Activated CD4-positive, alpha-beta T cell treated with anti-CD3 and anti-CD28 coated beads for 36 hours (primary cell): ENCODE measurements at regions of chr14 and their contacts with region 1.

Region 1: DNA sequence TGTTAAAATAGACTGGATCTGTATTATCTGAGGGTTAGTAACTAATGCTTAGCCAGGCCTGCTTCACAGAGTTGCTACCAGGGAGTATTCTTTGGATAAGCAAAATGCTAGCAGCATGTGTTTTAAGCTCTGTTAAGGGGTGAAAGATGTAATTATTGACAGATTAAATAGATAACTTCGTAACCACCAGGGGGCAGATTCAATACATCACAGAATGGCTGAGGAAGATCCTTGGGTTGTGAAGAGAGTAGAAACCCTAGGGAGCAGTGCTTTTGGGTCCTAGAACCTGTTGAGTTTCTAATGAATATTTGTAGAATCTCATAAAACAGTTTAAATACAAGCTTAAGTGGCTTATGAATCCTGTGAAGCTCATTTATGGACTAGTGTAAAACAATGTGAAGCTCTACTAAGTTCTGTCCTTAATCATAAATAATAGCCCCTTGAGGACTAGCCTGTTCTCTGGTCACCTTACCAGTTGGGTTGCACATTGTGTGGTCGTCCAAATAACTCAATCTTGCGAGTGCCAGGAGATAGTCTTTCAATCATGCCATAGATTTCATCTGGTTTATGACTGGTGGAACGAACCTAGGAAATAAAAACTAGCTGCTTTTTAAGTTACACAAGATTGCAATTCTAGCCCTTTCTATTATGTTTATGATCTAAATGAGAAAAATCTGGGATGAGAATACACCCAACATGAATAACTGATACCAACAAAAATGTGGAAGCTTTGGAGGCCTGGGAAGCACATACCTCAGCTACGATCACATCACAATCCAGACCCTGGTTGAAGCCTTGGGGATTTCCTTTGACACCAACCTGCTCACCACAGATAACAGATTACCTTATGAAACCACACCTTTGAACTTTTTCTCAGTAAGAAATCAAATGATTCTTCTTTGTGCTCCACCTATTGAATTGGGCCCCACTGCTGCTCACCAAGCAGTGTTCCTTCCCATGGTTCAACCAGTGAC is 12.3 kb downstream of the METTL3 start:
- DNase-seq: peak; percentile 22
- ATAC-seq: peak; percentile 78
- H3K4me3 Mint-ChIP-seq: no peak overlapping the region
- H3K27ac Mint-ChIP-seq: peak overlapping the region; percentile 64
- H3K4me1 Mint-ChIP-seq: peaks cover 23% of the 10 kb centered on the region
- H3K27me3 Mint-ChIP-seq: no peaks in the 10 kb centered on the region

Region 2: DNA sequence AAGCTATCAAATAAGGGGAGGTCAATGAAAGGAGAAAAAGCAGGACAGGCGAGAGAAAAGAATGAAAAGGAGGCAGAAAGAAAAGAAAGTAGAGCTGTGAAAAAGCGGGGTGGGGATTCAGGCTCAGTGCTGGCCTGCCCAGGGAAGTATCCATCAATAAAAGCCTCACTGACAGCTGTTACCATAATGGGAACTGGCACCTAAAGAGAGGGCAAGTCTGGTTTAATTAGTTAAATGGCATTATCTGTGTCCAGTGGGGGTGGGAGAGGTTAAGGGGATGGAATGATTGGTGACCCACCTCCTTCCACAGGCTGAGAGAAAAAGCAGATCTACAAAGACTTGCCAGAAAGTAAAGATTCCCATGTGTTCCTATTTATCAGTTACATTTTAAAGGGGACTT is 19.9 kb after region 1 on chr14:
- CTCF ChIA-PET with region 1: interaction called, 67 read pairs
- POLR2A ChIA-PET with region 1: no interaction called
- intact Hi-C with region 1: no loop called
- DNase-seq: no peak
- ATAC-seq: no peak
- H3K4me3 Mint-ChIP-seq: no peak overlapping the region
- H3K27ac Mint-ChIP-seq: no peak overlapping the region
- H3K4me1 Mint-ChIP-seq: no peaks in the 10 kb centered on the region
- H3K27me3 Mint-ChIP-seq: no peaks in the 10 kb centered on the region

Region 3: GRCh38 chr14:21525962-21526671 is 27.3 kb after region 1 on chr14 and contains the start of gene SALL2:
- CTCF ChIA-PET with region 1: interaction called, 16 read pairs
- POLR2A ChIA-PET with region 1: no interaction called
- intact Hi-C with region 1: no loop called
- DNase-seq: peak; percentile 87
- ATAC-seq: peak; percentile 87
- H3K4me3 Mint-ChIP-seq: peak within 1 kb of the TSS; percentile 71
- H3K27ac Mint-ChIP-seq: peak within 1 kb of the TSS; percentile 72
- H3K4me1 Mint-ChIP-seq: peaks cover 16% of the 10 kb centered on the region
- H3K27me3 Mint-ChIP-seq: no peaks in the 10 kb centered on the region
- total RNA-seq, gene SALL2: 5.5 to 6.3 TPM